Transverse colon (tissue), 4 donors: ENCODE measurements at regions of chr6 and their contacts with region 1.

Region 1: DNA sequence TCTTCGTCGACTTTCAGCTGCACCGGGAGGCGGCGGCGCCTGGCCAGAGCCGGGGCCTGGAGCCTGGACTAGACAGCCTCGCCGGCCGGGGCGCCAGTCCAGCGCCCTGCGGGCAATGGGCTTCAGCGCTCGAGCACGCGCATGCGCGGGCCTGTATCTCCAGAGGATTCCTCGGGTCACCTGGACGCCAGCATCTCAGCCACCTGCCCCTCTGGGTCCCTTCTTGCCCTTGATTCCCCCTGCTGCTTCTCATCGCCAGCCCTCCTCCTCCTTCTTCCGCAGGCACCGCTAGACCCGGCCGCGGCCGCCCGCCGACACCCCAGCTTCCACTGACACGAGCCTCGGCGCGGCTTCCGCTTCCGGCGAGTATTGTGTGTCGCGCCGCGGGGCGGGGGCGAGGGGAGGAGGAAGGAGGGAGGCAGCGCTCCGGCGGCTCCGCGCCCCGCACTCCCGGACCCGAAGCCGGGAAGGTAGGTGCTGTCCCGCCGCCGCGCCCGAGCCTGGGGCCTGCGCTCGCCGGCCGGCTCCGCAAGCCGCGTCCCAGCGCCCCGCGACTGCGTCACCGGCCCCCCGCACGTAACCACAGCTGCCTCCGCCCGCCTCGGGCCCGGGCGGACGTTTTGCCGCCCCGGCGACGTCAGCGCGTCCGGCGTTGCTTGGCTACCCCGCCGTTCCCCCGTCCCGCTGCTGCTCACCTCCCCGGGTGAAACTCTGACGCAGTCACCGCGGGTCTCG is at the start of gene TRIM39:
- DNase-seq: peak; percentile 88
- H3K4me3 ChIP-seq: peak within 1 kb of the TSS; percentile 68 to 88 (median 78)
- H3K27ac ChIP-seq: peak within 1 kb of the TSS; percentile 95 to 99 (median 98)
- H3K4me1 ChIP-seq: peaks cover 14 to 40% (median 20%) of the 10 kb centered on the region in 4 donors
- H3K27me3 ChIP-seq: no peaks in the 10 kb centered on the region
- CTCF ChIP-seq: no peak
- EP300 ChIP-seq: no peak
- POLR2A ChIP-seq: peak; percentile 91
- total RNA-seq, gene TRIM39: 7.6 to 19.1 (median 10.8) TPM

Region 2: GRCh38 chr6:30212865-30213666 is 113.6 kb before region 1 on chr6 and contains the start of gene TRIM26:
- in situ Hi-C with region 1: no loop called
- intact Hi-C with region 1: loop called (anchors 5 kb)
- DNase-seq: peak; percentile 99
- H3K4me3 ChIP-seq: peak within 1 kb of the TSS; percentile 66 to 88 (median 74)
- H3K27ac ChIP-seq: peak within 1 kb of the TSS; percentile 94 to 99 (median 98)
- H3K4me1 ChIP-seq: peaks cover 28 to 46% (median 31%) of the 10 kb centered on the region in 4 donors
- H3K27me3 ChIP-seq: no peaks in the 10 kb centered on the region
- CTCF ChIP-seq: no peak
- EP300 ChIP-seq: no peak
- POLR2A ChIP-seq: peak; percentile 99
- total RNA-seq, gene TRIM26: 19.5 to 92.0 (median 53.2) TPM

Region 3: DNA sequence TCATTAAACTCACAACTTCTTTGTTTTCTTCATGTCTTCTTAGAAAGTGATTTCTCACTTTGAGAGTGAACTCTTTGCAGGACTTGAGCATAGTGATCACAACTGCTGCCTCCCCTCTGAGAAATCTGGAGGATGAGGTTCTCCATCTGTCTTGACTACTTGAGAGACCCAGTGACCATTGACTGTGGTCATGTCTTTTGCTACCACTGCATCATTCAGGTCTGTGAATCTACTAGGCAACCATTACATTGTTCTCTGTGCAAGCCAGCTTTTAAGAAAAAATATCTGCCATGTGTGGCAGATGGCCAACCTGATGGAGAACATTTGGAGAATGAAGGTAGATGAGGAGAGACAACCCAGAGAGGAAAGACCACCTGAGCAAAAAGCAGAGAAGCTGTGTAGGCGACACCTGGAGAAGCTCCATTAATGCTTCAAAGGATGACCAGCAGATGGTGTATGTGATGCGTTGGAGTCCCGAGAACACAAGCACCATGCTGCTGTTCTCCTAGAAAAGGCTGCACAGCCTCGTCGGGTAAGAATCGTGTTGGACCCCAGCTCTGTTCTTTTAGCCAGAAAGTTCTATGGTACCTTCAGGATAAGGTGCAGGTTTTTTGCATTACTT is 88.4 kb before region 1 on chr6:
- in situ Hi-C with region 1: no loop called
- intact Hi-C with region 1: no loop called
- DNase-seq: no peak
- H3K4me3 ChIP-seq: no peak overlapping the region
- H3K27ac ChIP-seq: no peak overlapping the region
- H3K4me1 ChIP-seq: no peaks in the 10 kb centered on the region
- H3K27me3 ChIP-seq: peaks cover 6% of the 10 kb centered on the region
- CTCF ChIP-seq: peak; percentile 9 to 26 (median 18)
- EP300 ChIP-seq: no peak
- POLR2A ChIP-seq: no peak